GM12878 (cell line): ENCODE measurements at regions of chr15 and their contacts with region 1.

Region 1: GRCh38 chr15:74956648-74957300 is at the start of gene RPP25:
- DNase-seq: no peak
- ATAC-seq: peak; percentile 94
- H3K4me3 ChIP-seq: peak within 1 kb of the TSS; percentile 65
- H3K27ac ChIP-seq: no peak within 1 kb of the TSS
- H3K4me1 ChIP-seq: peaks cover 30% of the 10 kb centered on the region
- H3K27me3 ChIP-seq: peaks cover 8 to 17% of the 10 kb centered on the region in 2 experiments
- CTCF ChIP-seq: no peak
- EP300 ChIP-seq: no peak
- POLR2A ChIP-seq: peak; percentile 76
- RAD21 ChIP-seq: no peak
- polyA plus RNA-seq, gene RPP25: 0.63 to 1.8 TPM

Region 2: GRCh38 chr15:75008629-75009326 is 52.0 kb after region 1 on chr15:
- CTCF ChIA-PET with region 1: interaction called, 4 read pairs
- POLR2A ChIA-PET with region 1: interaction called, 4 read pairs
- RAD21 ChIA-PET with region 1: interaction called, 4 read pairs
- SMC1A ChIA-PET with region 1: interaction called, 3 read pairs
- in situ Hi-C with region 1: no loop called
- intact Hi-C with region 1: loop called (anchors 5 kb)
- DNase-seq: peak; percentile 83
- ATAC-seq: peak; percentile 89
- H3K4me3 ChIP-seq: peak overlapping the region; percentile 34; the same call in 1 of the 2 replicates
- H3K27ac ChIP-seq: peak overlapping the region; percentile 93
- H3K4me1 ChIP-seq: peaks cover 28% of the 10 kb centered on the region
- H3K27me3 ChIP-seq: no peaks in the 10 kb centered on the region
- CTCF ChIP-seq: no peak
- EP300 ChIP-seq: peak; percentile 50 to 75; a peak in 3 of 4 replicates
- POLR2A ChIP-seq: no peak
- RAD21 ChIP-seq: no peak